Esophagus muscularis mucosa (tissue), 4 donors: ENCODE measurements at regions of chr10 and their contacts with region 1.

Region 1: GRCh38 chr10:70478191-70479164 is at the start of gene PALD1:
- DNase-seq: no peak
- H3K4me3 ChIP-seq: peak within 1 kb of the TSS; percentile 69 to 90 (median 76)
- H3K27ac ChIP-seq: peak within 1 kb of the TSS; percentile 76 to 86 (median 82)
- H3K4me1 ChIP-seq: peaks cover 56 to 62% (median 59%) of the 10 kb centered on the region in 4 donors
- H3K27me3 ChIP-seq: no peaks in the 10 kb centered on the region
- CTCF ChIP-seq: peak in 2 of 3 experiments; percentile 42 to 49
- EP300 ChIP-seq: no peak
- POLR2A ChIP-seq: peak; percentile 16
- total RNA-seq, gene PALD1: 10.4 to 19.1 (median 12.8) TPM

Region 2: GRCh38 chr10:70513848-70514309 is 35.4 kb after region 1 on chr10:
- intact Hi-C with region 1: loop called (anchors 5 kb)
- DNase-seq: no peak
- H3K4me3 ChIP-seq: no peak overlapping the region
- H3K27ac ChIP-seq: no peak overlapping the region
- H3K4me1 ChIP-seq: peaks cover 60 to 63% (median 61%) of the 10 kb centered on the region in 4 donors
- H3K27me3 ChIP-seq: no peaks in the 10 kb centered on the region
- CTCF ChIP-seq: no peak
- EP300 ChIP-seq: no peak
- POLR2A ChIP-seq: no peak

Region 3: DNA sequence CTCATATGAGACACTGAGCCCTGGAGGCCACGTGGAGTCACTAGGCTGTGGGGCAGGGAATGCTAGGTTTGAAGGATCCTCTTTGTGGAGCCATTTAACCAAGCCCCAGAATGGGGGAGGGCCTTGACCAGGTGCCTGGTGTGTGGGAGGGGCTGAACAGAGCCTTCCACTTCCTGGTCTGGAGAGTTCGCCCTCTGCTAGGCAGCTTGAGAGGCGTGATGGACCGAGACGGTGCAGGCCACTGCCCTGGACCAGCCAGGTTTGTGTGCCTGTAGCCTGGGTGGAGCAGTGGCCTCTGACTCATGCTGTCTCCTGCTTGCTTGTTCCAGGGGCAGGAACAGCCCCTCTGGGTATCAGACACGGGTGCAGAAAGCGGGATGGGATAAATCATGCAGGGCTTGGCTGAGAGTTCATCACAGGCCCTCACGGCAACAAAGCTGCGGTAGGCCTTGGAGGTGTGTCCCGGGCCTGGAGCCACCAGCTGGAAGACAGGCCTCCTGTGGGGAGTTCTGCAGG is 221.2 kb after region 1 on chr10:
- intact Hi-C with region 1: no loop called
- DNase-seq: no peak
- H3K4me3 ChIP-seq: no peak overlapping the region
- H3K27ac ChIP-seq: no peak overlapping the region
- H3K4me1 ChIP-seq: peaks cover 0 to 7% (median 2%) of the 10 kb centered on the region in 4 donors
- H3K27me3 ChIP-seq: no peaks in the 10 kb centered on the region
- CTCF ChIP-seq: no peak
- EP300 ChIP-seq: no peak
- POLR2A ChIP-seq: no peak

Region 4: GRCh38 chr10:71059054-71059818 is 580.8 kb after region 1 on chr10:
- intact Hi-C with region 1: no loop called
- DNase-seq: no peak
- H3K4me3 ChIP-seq: no peak overlapping the region
- H3K27ac ChIP-seq: no peak overlapping the region
- H3K4me1 ChIP-seq: peaks cover 0 to 2% (median 0%) of the 10 kb centered on the region in 4 donors
- H3K27me3 ChIP-seq: no peaks in the 10 kb centered on the region
- CTCF ChIP-seq: no peak
- EP300 ChIP-seq: no peak
- POLR2A ChIP-seq: no peak